Stomach (tissue), 19 donors: ENCODE measurements at regions of chr4 and their contacts with region 1.

Region 1: GRCh38 chr4:56907489-56908205 is at the start of gene REST:
- DNase-seq: peak; percentile 84 to 91
- H3K4me3 ChIP-seq: peak within 1 kb of the TSS; percentile 89 to 99 (median 96)
- H3K27ac ChIP-seq: peak within 1 kb of the TSS; percentile 85 to 96 (median 94)
- H3K4me1 ChIP-seq: peaks cover 11 to 46% (median 39%) of the 10 kb centered on the region in 4 donors
- H3K27me3 ChIP-seq: no peaks in the 10 kb centered on the region
- CTCF ChIP-seq: no peak
- EP300 ChIP-seq: no peak
- POLR2A ChIP-seq: no peak
- total RNA-seq, gene REST: 36.4 to 79.7 (median 47.4) TPM

Region 2: DNA sequence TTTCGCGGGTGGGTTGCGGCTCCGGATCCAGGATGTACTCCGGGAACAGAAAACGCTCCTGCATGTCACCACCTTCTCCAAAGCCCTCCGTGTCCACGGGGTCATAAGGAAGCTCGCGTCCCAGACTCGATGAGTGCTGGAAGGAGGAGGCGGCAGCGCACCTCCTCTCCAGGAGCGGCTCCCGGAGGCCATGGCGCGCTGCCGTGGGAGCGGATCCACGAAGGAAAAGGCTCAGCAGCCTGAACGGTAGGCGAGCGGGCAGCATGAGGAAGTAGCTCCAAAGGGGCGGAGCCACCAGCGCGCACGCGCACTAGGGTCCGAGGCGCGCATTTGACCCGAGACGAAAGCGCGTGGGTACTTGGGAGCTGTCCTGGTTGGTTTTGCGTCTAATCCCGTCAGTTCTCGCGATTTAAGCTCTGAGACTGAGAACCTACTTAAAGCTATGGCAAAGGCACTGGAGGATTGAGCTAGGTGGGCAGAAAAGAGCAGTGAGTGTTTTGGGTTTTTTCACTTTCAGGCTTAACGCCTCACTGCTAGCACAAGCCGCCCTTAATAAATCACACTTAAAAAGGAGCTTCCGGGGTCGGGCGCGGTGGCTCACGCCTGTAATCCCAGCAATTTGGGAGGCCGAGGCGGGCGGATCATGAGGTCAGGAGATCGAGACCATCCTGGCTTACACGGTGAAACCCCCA is 69.8 kb after region 1 on chr4 and contains the start of gene NOA1:
- intact Hi-C with region 1: loop called (anchors 5 kb)
- DNase-seq: peak; percentile 99
- H3K4me3 ChIP-seq: peak within 1 kb of the TSS; percentile 73 to 99 (median 96)
- H3K27ac ChIP-seq: peak within 1 kb of the TSS; percentile 89 to 94 (median 93)
- H3K4me1 ChIP-seq: peaks cover 41 to 65% (median 52%) of the 10 kb centered on the region in 4 donors
- H3K27me3 ChIP-seq: no peaks in the 10 kb centered on the region
- CTCF ChIP-seq: no peak
- EP300 ChIP-seq: no peak
- POLR2A ChIP-seq: peak in 1 of 4 donors; percentile 26
- total RNA-seq, gene NOA1: 1.2 to 81.7 (median 13.6) TPM